WTC11 (cell line): ENCODE measurements at regions of chr16 and their contacts with region 1.

Region 1: GRCh38 chr16:85491058-85491771 is 121.9 kb upstream of the GSE1 start:
- DNase-seq: peak; percentile 78
- ATAC-seq: peak; percentile 66
- H3K4me3 Mint-ChIP-seq: no peak overlapping the region
- H3K27ac Mint-ChIP-seq: peak overlapping the region; percentile 90
- H3K4me1 Mint-ChIP-seq: peaks cover 17% of the 10 kb centered on the region
- H3K27me3 Mint-ChIP-seq: no peaks in the 10 kb centered on the region
- CTCF ChIP-seq: peak; percentile 86

Region 2: GRCh38 chr16:85448557-85449197 is 42.5 kb before region 1 on chr16:
- CTCF ChIA-PET with region 1: interaction called, 18 read pairs
- POLR2A ChIA-PET with region 1: no interaction called
- DNase-seq: no peak
- ATAC-seq: peak; percentile 26
- H3K4me3 Mint-ChIP-seq: no peak overlapping the region
- H3K27ac Mint-ChIP-seq: no peak overlapping the region
- H3K4me1 Mint-ChIP-seq: peaks cover 13% of the 10 kb centered on the region
- H3K27me3 Mint-ChIP-seq: no peaks in the 10 kb centered on the region
- CTCF ChIP-seq: no peak

Region 3: DNA sequence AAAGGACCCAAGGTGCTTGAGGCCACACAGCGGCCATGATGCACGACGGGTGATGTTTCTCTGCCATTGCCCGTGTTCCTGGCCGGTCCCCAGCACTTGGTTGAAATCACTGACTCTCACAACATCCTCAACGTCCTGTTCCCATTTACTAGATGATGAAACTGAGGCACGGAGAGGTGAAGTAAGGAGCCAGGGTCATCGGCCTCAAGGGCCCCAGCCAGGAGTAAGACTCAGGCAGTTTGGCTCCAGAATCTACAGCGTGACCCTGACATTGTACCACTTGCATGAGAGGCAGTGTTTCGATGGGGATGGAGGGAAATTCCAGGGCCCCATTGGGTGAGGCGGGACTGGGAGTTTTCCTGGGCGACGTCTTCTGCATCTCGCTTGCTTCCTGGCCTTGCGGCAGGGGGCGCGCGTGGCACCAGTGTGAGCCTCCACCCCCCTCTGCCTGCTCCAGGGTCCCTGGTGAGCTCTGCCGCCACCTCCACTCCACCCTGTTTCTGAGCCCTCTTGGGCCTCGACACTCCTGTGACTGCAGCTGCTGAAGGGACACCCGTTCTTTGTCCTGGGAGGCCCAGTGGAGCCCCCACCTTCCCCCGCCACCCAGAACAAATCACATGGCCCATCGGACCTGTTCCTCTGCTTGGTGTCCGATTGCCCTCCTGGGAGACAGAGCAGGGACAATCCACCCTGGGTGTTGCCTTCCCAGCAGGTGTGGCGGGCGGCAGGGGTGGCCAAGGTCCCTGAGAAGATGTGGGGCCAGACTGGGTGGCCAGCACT is 11.1 kb before region 1 on chr16:
- CTCF ChIA-PET with region 1: interaction called, 22 read pairs
- POLR2A ChIA-PET with region 1: no interaction called
- DNase-seq: peak; percentile 64
- ATAC-seq: peak; percentile 74
- H3K4me3 Mint-ChIP-seq: no peak overlapping the region
- H3K27ac Mint-ChIP-seq: no peak overlapping the region
- H3K4me1 Mint-ChIP-seq: peaks cover 9% of the 10 kb centered on the region
- H3K27me3 Mint-ChIP-seq: no peaks in the 10 kb centered on the region
- CTCF ChIP-seq: no peak

Region 4: DNA sequence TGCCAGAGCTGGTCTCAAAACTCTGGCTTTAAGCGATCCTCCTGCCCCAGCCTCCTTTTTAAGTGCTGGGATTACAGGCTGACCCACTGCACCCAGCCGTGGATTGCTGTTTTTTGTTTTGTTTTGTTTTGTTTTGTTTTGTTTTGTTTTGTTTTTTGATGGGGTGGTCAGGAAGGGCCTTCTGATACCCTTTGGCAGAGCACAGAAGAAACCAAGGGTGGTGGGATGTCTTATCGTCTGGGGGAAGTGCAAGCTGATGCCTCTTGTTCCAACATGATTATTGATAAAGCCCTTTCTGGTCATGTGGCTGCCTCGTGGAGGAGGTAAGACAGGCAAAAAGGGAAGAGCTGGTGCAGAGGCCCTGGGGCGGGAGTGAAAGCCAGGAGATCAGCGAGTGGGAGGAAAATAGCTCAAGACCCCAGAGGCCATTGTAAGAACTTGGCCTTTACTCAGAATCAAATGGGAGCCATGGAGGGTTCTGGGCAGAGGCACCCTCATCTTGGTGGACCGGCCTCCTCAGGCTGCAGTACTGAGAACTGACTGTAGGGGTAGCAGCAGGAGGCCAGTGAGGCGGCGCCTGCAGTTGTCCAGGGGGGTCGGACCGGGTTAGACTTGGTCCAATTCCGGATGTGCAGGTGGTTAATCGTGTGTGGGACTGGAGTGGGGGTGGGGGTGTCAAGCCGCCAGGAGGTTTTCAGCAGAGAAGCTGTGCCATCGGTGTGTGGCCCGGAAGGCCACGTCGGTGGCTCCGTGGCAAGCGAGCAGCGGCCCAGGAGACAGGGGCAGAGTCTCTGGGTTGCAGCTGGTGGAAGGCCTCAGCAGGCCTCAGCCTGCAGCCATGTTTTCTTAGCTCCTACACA is 37.5 kb after region 1 on chr16:
- CTCF ChIA-PET with region 1: interaction called, 27 read pairs
- POLR2A ChIA-PET with region 1: no interaction called
- DNase-seq: no peak
- ATAC-seq: no peak
- H3K4me3 Mint-ChIP-seq: no peak overlapping the region
- H3K27ac Mint-ChIP-seq: peak overlapping the region; percentile 53; the same call in 1 of the 2 replicates
- H3K4me1 Mint-ChIP-seq: peaks cover 32% of the 10 kb centered on the region
- H3K27me3 Mint-ChIP-seq: no peaks in the 10 kb centered on the region
- CTCF ChIP-seq: peak; percentile 38; the same call in 1 of the 2 replicates

Region 5: DNA sequence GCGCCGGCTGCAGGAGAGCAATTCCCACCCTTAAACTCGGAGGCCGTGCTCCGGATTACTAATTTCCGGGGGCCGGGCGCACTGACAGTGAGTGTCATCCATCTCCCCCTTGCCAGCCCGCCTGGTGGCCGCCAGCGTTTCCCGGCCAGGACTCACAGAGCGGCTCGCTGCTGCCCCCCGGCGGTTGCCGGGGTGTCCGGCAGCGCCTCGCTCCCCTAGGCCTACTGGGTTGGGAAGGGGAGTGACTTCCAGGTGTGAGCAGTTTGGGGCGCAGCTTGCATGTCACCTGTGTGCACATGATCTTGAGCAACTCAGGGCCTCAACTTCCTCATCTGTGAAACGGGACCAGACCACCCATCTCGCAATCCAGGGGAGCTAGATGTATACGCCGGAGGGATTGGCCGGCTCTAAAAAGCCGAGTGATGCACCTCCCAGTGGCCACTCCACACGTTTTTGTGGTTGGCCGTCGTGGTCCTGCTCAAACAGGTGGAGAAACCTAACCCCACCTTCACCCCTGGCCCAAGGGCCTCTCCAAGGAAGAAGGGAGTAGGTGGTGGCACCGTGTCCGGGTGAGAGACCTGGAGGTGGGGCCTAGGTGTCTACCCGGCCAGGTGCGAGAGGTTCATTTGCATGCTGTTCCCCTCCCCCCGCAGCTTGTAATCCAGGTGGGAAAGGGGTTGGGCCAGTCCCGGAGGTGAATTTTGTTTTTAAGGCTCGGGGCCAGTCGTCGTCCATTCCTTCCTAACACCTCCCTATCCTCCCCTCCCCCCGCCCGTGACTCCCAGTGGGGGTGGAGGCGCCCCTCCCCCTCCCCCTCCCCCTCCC is 119.5 kb after region 1 on chr16:
- CTCF ChIA-PET with region 1: interaction called, 66 read pairs
- POLR2A ChIA-PET with region 1: no interaction called
- DNase-seq: peak; percentile 94
- ATAC-seq: peak; percentile 40
- H3K4me3 Mint-ChIP-seq: peak overlapping the region; percentile 68
- H3K27ac Mint-ChIP-seq: peak overlapping the region; percentile 97
- H3K4me1 Mint-ChIP-seq: peaks cover 49% of the 10 kb centered on the region
- H3K27me3 Mint-ChIP-seq: peaks cover 17% of the 10 kb centered on the region
- CTCF ChIP-seq: peak; percentile 96

Region 6: GRCh38 chr16:85688586-85689284 is 197.5 kb after region 1 on chr16 and contains the start of gene GINS2:
- CTCF ChIA-PET with region 1: no interaction called
- POLR2A ChIA-PET with region 1: no interaction called
- DNase-seq: peak; percentile 93
- ATAC-seq: peak; percentile 99
- H3K4me3 Mint-ChIP-seq: peak within 1 kb of the TSS; percentile 74
- H3K27ac Mint-ChIP-seq: no peak within 1 kb of the TSS
- H3K4me1 Mint-ChIP-seq: peaks cover 10% of the 10 kb centered on the region
- H3K27me3 Mint-ChIP-seq: peaks cover 17% of the 10 kb centered on the region; the same call in 1 of the 2 replicates
- CTCF ChIP-seq: no peak
- total RNA-seq, gene GINS2: 35.5 to 38.4 TPM (median 38.0 TPM) in 3 replicates